Heart right ventricle (tissue), 16 donors: ENCODE measurements at regions of chr14 and their contacts with region 1.

Region 1: DNA sequence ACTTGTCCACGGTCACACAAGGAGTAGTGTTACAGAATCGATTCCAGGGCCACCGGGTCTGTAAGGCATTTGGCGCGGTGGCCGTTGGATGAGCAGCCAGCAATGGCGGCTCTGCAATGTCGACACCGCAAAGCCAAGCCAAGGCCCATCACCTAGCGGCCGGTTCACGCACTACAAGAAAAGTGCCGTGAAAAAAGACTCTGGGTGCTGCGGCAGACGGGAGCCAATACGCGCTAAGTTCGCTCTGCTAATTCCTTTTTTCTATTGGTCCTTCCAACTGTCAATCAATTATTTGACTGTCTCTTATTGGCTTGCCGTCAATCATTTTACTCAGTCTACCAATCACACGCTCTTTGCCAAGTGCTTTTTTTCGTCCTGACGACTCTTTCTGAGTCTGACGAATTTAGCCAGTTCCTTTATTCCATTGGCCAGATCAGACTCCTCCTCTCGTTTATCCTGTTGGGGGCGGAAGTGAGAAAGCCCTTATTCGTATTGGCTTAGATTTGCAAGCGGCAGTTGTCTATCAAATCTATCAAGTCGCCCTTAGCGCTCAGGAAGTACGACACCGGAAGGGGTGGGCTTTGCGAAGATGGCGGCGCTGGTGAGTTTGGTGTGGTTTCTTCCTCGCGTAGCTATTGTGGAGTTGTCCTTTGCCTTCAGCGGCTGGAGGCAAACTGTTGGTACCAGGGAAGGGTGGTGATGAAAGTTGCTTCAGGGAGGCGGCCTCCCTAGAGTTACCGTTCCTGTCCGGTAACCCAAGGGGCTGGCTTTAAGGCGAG is at the start of gene NGDN:
- DNase-seq: peak; percentile 92 to 98
- ATAC-seq: peak; percentile 94 to 98 (median 97)
- H3K4me3 ChIP-seq: peak within 1 kb of the TSS; percentile 64 to 93 (median 82)
- H3K27ac ChIP-seq: peak within 1 kb of the TSS; percentile 63 to 92 (median 81)
- H3K4me1 ChIP-seq: peaks cover 0 to 15% (median 10%) of the 10 kb centered on the region in 9 donors
- H3K27me3 ChIP-seq: no peaks in the 10 kb centered on the region
- CTCF ChIP-seq: peak; percentile 77 to 92 (median 85)
- total RNA-seq, gene NGDN: 14.4 to 20.9 (median 17.2) TPM

Region 2: DNA sequence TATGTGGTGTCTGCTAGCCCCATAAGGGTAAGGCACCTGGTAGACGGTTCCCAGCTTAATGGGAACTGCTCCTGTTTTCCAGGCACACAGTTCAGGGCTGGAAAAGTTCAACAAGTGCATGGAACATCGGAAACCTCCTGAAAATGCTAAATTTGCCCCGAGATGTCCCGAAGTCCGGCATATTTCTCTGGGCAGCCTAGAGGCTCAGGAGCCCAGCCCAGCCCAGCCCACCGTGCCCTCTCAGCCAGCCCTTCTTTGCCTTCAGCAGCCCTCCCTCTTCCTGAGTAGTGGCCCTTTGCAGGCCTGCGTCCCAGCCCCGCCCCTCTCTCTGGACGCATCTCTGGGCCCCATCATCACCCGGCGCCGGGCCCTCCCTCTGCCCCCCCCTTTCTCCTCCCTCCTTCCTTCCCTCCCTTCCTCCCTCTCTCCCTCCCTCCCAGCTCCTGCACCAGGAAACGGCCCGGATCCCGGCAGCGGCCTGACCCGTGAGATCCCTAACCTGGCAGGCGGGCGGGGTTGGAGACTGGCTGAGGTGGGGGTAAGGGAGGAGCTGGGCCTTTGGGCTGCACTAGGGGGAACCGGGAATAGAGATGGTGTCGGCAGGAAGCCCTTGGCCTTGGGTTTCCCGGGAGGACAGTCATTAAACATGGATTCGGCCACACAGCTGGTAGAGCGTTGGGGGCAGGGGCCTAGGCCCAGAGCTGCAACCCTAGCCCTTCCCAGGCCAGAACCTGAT is 162.7 kb before region 1 on chr14 and contains the start of gene BCL2L2:
- intact Hi-C with region 1: loop called in 1 of 10 experiments (anchors 5 kb)
- DNase-seq: peak; percentile 92 to 94
- ATAC-seq: peak; percentile 59 to 84 (median 78)
- H3K4me3 ChIP-seq: peak within 1 kb of the TSS; percentile 39 to 85 (median 72)
- H3K27ac ChIP-seq: peak within 1 kb of the TSS; percentile 48 to 93 (median 91)
- H3K4me1 ChIP-seq: peaks cover 13 to 41% (median 37%) of the 10 kb centered on the region in 9 donors
- H3K27me3 ChIP-seq: no peaks in the 10 kb centered on the region
- CTCF ChIP-seq: no peak
- total RNA-seq, gene BCL2L2: 33.3 to 44.9 (median 38.2) TPM

Region 3: DNA sequence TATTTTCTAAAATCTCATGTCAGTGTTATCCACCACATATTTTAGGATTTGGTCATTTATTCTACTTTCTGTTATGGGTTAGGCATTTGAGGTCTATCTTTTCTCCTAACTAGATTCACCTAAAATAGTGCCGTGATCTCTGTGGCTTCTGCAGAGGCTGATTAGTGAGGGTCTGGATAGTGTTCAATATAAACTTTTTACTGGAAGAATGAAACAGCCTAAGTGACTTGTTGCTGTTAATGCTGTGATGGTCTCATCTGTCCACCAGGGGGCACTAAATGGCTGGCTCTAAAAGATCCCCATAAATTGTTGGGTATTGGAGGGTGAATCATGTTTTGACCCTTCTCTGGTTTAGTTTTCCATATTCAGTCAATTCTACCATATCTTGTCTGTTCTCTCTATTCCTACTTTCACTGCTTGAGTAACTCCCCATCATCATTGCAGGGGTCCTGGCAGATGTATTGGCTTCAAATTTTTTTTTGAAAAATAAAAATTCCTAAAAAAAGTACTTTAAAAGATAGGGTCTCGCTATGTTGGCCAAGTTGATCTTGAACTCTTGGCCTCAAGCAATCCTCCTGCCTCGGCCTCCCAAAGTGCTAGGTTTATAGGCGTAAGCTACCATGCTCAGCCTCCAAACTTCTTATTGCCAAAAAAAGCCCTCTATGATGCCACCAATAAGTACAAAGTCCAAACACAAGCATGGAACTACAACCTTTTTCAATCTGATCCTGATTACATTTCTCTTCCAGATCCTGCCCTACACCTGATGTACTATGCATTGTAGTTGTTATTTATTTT is 141.2 kb before region 1 on chr14:
- intact Hi-C with region 1: loop called in 7 of 10 experiments (anchors 2 to 10 kb)
- DNase-seq: peak in 1 of 2 donors; percentile 73
- ATAC-seq: peak in 7 of 8 donors; percentile 55 to 78 (median 68)
- H3K4me3 ChIP-seq: no peak overlapping the region
- H3K27ac ChIP-seq: no peak overlapping the region
- H3K4me1 ChIP-seq: peaks cover 0 to 10% (median 6%) of the 10 kb centered on the region in 9 donors
- H3K27me3 ChIP-seq: peaks cover 0 to 1% (median 0%) of the 10 kb centered on the region in 7 donors
- CTCF ChIP-seq: peak; percentile 80 to 94 (median 88)

Region 4: GRCh38 chr14:23555882-23556699 is 86.8 kb after region 1 on chr14 and contains the start of gene THTPA:
- intact Hi-C with region 1: loop called in 1 of 10 experiments (anchors 2 kb)
- DNase-seq: peak; percentile 92 to 93
- ATAC-seq: peak; percentile 93 to 96 (median 95)
- H3K4me3 ChIP-seq: peak within 1 kb of the TSS; percentile 58 to 93 (median 82)
- H3K27ac ChIP-seq: peak within 1 kb of the TSS; percentile 93 to 100 (median 97)
- H3K4me1 ChIP-seq: peaks cover 5 to 34% (median 26%) of the 10 kb centered on the region in 9 donors
- H3K27me3 ChIP-seq: no peaks in the 10 kb centered on the region
- CTCF ChIP-seq: no peak
- total RNA-seq, gene THTPA: 15.8 to 27.9 (median 18.0) TPM

Region 5: DNA sequence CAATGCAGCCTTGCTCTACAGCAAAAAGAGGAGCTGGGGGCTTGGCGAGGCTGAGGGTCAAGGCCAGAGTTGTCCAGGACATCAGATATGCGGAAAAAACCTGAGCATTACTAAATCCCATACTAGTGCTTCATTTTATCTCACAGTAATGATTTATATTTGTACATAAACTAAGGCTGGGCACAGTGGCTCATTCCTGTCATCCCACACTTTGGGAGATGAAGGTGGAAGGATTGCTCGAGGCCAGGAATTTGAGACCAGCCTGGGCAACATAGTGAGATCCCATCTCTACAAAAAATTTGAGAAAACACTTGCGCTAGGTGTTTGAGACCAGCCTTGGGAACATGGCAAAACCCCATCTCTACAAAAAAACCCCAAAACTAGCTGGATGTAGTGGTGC is 120.9 kb after region 1 on chr14:
- intact Hi-C with region 1: no loop called
- DNase-seq: no peak
- ATAC-seq: no peak
- H3K4me3 ChIP-seq: no peak overlapping the region
- H3K27ac ChIP-seq: no peak overlapping the region
- H3K4me1 ChIP-seq: peaks cover 0 to 8% (median 7%) of the 10 kb centered on the region in 9 donors
- H3K27me3 ChIP-seq: peaks cover 0 to 14% (median 0%) of the 10 kb centered on the region in 7 donors
- CTCF ChIP-seq: no peak